PC-3 (cell line): ENCODE measurements at regions of chr6 and their contacts with region 1.

Region 1: DNA sequence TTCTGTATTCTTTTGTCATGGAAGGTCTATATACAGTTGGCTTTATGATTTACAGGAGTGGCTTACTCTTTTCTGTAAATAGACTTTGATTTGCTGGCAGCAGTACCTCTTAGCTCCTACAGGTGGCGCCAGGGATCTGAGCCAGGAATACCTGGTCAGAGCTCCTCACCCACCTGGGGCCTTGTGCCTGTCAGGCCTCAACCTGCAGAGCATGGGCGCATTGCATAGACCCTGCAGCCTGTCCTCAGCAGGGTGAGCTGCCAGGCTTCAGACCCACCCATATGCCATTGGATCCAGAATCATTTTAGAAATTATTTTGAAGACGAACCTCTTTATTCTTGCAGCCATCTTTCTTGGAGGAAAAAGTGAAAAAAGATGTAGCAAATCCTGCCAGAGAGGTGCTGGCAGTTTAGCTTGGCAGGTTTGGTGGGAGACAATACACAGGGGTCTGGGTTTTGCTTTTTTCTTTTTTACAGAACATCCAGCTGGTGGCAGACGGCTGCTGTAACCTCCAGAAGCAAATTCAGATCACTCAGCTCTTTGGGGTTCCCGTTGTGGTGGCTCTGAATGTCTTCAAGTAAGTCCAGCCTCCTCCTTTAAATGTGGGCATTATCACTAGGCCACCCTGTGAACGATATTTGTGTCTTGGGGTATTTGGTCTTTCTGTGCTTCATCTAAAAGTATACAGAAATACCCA is 149.1 kb downstream of the MTHFD1L start:
- DNase-seq: peak; percentile 79
- ATAC-seq: peak; percentile 82
- H3K4me3 ChIP-seq: no peak overlapping the region
- H3K27ac ChIP-seq: peak overlapping the region; percentile 60
- H3K4me1 ChIP-seq: peaks cover 13% of the 10 kb centered on the region; the same call in 1 of the 2 replicates
- H3K27me3 ChIP-seq: no peaks in the 10 kb centered on the region
- CTCF ChIP-seq: peak; percentile 91

Region 2: GRCh38 chr6:150767571-150768018 is 247.0 kb before region 1 on chr6:
- CTCF ChIA-PET with region 1: no interaction called
- POLR2A ChIA-PET with region 1: no interaction called
- intact Hi-C with region 1: no loop called
- DNase-seq: no peak
- ATAC-seq: no peak
- H3K4me3 ChIP-seq: no peak overlapping the region
- H3K27ac ChIP-seq: no peak overlapping the region
- H3K4me1 ChIP-seq: no peaks in the 10 kb centered on the region
- H3K27me3 ChIP-seq: no peaks in the 10 kb centered on the region
- CTCF ChIP-seq: no peak

Region 3: DNA sequence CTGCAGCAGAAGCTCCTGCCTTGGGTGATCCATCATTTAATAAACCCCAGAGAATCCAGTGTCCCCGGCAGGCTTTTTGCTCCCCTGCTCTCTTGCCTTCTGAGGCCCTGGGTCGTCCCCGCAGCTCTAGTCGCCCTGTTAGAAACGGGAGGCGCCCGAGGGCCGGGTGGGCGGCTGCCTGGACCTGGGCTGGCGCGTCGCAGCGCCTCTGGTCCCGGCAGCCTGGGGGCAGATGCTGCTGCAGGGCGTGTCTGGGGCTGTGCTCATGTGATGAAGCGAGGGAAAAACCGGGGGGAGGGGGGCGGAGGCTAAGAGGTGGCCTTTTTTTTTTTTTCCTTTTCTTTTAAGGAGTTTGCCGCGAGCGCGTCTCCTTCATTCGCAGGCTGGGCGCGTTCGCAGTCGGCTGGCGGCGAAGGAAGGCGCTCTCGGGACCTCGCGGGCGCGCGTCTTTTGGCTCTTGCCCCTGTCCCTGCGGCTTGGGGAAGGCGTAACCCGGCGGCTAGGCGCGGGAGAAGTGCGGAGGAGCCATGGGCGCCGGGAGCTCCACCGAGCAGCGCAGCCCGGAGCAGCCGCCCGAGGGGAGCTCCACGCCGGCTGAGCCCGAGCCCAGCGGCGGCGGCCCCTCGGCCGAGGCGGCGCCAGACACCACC is 225.6 kb after region 1 on chr6:
- CTCF ChIA-PET with region 1: no interaction called
- POLR2A ChIA-PET with region 1: no interaction called
- intact Hi-C with region 1: loop called (anchors 10 kb)
- DNase-seq: peak; percentile 43
- ATAC-seq: peak; percentile 65
- H3K4me3 ChIP-seq: peak overlapping the region; percentile 92
- H3K27ac ChIP-seq: no peak overlapping the region
- H3K4me1 ChIP-seq: peaks cover 17% of the 10 kb centered on the region
- H3K27me3 ChIP-seq: no peaks in the 10 kb centered on the region
- CTCF ChIP-seq: no peak

Region 4: DNA sequence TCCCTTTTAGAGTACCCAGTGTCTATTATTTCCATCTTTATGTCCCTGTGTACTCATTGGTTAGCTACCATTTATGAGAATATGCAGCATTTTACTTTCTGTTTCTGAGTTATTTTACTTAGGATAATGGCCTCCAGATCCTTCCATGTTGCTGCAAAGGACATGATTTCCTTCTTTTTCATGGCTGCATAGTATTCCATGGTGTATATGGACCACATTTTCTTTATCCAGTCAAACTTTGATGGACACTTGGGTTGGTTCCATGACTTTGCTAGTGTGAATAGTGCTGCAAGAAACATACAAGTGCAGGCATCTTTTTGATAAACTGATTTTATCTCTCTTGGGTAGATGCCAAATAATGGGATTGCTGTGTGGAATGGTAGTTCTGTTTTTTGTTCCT is 321.4 kb after region 1 on chr6:
- CTCF ChIA-PET with region 1: interaction called, 5 read pairs
- POLR2A ChIA-PET with region 1: no interaction called
- intact Hi-C with region 1: loop called (anchors 2 kb)
- DNase-seq: no peak
- ATAC-seq: no peak
- H3K4me3 ChIP-seq: no peak overlapping the region
- H3K27ac ChIP-seq: no peak overlapping the region
- H3K4me1 ChIP-seq: no peaks in the 10 kb centered on the region
- H3K27me3 ChIP-seq: no peaks in the 10 kb centered on the region
- CTCF ChIP-seq: no peak

Region 5: DNA sequence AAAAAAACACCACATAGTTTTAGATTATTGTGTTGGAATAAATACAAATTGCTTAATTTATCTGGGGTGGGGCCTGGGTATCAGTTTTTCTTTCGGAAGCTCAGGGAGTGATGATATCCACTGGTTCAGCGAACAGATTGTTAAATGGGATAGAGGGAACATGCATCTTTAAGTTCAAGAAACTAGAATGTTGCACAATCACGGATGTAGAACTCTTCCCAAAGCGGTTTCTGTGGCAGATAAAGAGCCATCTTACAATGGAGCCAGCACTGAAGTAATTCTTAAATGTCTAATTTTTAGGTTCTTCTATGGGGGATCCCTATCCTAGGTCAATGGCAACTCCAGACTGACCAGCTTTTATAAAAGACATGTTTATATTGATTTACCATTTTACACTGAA is 447.1 kb after region 1 on chr6:
- CTCF ChIA-PET with region 1: no interaction called
- POLR2A ChIA-PET with region 1: no interaction called
- intact Hi-C with region 1: no loop called
- DNase-seq: no peak
- ATAC-seq: no peak
- H3K4me3 ChIP-seq: no peak overlapping the region
- H3K27ac ChIP-seq: no peak overlapping the region
- H3K4me1 ChIP-seq: no peaks in the 10 kb centered on the region
- H3K27me3 ChIP-seq: no peaks in the 10 kb centered on the region
- CTCF ChIP-seq: no peak